ENCODE measurements at regions of chr11 and their contacts with region 1.

Region 1: GRCh38 chr11:47213985-47214564 is 699 bp upstream of the DDB2 start:
- DNase-seq: peak; percentile 81
- ATAC-seq: peak; percentile 80
- H3K4me3 Mint-ChIP-seq: peak overlapping the region; percentile 99
- H3K27ac Mint-ChIP-seq: peak overlapping the region; percentile 100
- H3K4me1 Mint-ChIP-seq: peaks cover 32% of the 10 kb centered on the region
- H3K27me3 Mint-ChIP-seq: peaks cover 2% of the 10 kb centered on the region

Region 2: DNA sequence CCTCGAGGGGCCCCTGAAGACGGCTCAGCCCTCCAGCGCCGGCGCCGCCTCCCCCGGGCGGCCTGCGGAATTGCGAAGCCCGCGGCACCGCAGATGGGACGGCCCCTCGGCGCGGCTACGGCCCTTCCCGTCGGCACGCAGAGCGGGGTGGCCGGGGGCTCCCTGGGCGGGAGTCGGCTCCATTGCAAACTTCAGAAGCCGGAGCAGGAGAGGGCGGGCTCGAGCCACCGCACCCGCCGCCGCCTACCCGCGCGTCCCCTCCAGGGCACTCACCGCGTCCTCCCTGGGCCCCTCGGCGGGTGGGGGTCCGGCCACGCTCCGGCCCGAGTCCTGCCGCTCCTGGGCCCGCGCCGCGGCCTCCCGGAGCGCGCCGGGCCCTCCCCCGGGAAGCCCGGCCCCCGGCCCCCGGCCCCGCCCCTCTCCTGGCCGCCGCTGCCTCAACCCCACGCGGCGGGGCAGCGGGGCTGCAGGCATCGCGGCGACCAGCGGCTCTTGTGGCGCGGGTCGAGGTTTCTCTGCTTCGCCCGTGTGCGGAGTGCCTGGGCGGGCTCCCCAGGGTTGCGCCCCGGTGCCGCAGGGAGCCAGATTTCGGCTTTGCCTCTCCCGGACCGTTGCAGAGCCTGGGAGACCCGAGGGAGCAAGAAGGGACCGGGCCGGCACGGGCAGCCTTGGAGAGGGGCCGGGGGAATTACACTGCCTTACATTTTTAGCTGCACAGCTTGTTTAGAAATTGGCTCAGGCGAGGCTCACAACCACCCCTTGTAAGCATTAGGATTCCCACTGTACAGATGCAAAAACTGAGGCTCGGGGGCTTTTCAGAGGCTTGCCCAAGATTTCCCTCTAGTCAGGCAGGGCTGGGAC is 27.8 kb before region 1 on chr11 and contains the start of gene PACSIN3:
- POLR2A ChIA-PET with region 1: interaction called, 53 read pairs
- DNase-seq: peak; percentile 61
- ATAC-seq: peak; percentile 57
- H3K4me3 Mint-ChIP-seq: peak within 1 kb of the TSS; percentile 77
- H3K27ac Mint-ChIP-seq: no peak within 1 kb of the TSS
- H3K4me1 Mint-ChIP-seq: peaks cover 10% of the 10 kb centered on the region
- H3K27me3 Mint-ChIP-seq: peaks cover 55% of the 10 kb centered on the region
- total RNA-seq, gene PACSIN3: 1.1 to 1.3 TPM

Region 3: DNA sequence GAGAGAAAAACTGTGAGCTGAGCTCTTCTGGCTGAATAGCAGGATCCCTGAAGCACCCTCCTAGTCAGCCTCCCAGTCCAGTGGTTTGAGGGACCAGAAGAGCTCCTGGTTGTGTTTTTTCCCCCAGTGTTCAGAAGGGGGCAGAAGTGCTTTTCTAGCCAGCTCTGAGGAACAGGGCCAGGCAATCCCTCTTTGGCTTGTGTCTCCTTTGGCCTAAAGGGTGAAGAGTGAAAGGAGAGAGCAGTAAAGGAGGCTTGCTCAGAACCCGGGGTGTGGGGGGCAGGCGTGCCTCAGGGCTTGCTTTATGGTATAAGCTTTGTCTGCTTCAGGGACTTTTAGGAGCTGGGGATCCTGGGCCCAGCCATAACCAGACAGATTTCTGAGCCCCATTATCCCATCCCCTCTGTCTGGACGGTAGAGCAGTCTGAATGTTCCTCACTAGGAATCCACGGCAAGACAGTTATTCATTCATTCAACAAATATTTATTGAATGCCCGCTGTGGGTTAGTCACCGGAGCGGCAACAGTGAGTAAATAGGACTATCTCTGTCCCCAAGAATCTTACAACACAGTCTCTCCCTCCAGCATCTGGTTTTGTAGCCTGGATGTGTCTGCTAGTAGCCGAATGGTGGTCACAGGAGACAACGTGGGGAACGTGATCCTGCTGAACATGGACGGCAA is 20.1 kb after region 1 on chr11:
- POLR2A ChIA-PET with region 1: interaction called, 43 read pairs
- DNase-seq: no peak
- ATAC-seq: peak; percentile 49
- H3K4me3 Mint-ChIP-seq: peak overlapping the region; percentile 55
- H3K27ac Mint-ChIP-seq: peak overlapping the region; percentile 76
- H3K4me1 Mint-ChIP-seq: peaks cover 28% of the 10 kb centered on the region
- H3K27me3 Mint-ChIP-seq: no peaks in the 10 kb centered on the region

Region 4: GRCh38 chr11:47259178-47259977 is 45.3 kb after region 1 on chr11:
- POLR2A ChIA-PET with region 1: interaction called, 24 read pairs
- DNase-seq: peak; percentile 52
- ATAC-seq: peak; percentile 83
- H3K4me3 Mint-ChIP-seq: no peak overlapping the region
- H3K27ac Mint-ChIP-seq: peak overlapping the region; percentile 79
- H3K4me1 Mint-ChIP-seq: peaks cover 23% of the 10 kb centered on the region
- H3K27me3 Mint-ChIP-seq: no peaks in the 10 kb centered on the region

Measured in activated naive CD8-positive, alpha-beta T cell treated with anti-CD3 and anti-CD28 coated beads, Interleukin-2, amount 10 ng/mL, durations not matched to agents 7 days and 5 days (primary cell).